AG04450 (cell line): ENCODE measurements at regions of chr5 and their contacts with region 1.

Region 1: GRCh38 chr5:140145818-140146522 is 20.2 kb downstream of the IGIP start:
- DNase-seq: peak; percentile 24
- H3K4me3 ChIP-seq: peak overlapping the region; percentile 54
- H3K27ac ChIP-seq: no peak overlapping the region
- H3K27me3 ChIP-seq: peaks cover 5% of the 10 kb centered on the region
- CTCF ChIP-seq: peak; percentile 52

Region 2: DNA sequence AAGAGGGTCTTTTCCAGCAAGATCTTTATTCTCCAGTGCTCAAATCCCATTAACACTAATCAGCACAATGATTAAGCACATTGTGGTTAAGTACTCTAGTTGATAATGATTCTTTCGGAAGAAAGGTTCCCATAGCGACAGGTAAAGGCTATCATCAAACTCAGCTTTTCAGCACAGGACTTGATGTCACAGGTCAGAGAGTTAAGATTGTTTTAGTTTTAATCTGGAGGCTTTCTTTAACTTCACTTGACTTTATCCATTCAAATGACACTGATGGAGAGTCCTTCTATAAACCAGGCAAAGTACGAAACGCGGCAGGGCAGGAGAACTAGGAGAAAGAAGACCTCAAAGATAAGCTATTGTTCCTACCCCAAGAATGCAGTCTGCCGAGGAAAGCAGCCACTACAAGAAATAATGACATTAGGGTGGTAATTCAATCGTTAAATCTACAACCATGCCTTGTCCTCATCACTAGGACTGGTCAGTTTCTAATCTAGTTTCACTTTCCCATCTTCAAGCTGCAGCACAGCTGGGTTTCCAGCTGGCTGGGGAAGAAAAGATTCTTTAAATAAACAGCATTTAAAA is 107.5 kb before region 1 on chr5:
- CTCF ChIA-PET with region 1: interaction called, 12 read pairs
- POLR2A ChIA-PET with region 1: no interaction called
- DNase-seq: peak; percentile 7
- H3K4me3 ChIP-seq: peak overlapping the region; percentile 46
- H3K27ac ChIP-seq: no peak overlapping the region
- H3K27me3 ChIP-seq: peaks cover 23% of the 10 kb centered on the region
- CTCF ChIP-seq: no peak

Region 3: GRCh38 chr5:140081030-140081429 is 64.9 kb before region 1 on chr5:
- CTCF ChIA-PET with region 1: interaction called, 161 read pairs
- POLR2A ChIA-PET with region 1: no interaction called
- DNase-seq: no peak
- H3K4me3 ChIP-seq: no peak overlapping the region
- H3K27ac ChIP-seq: no peak overlapping the region
- H3K27me3 ChIP-seq: peaks cover 29% of the 10 kb centered on the region
- CTCF ChIP-seq: no peak

Region 4: DNA sequence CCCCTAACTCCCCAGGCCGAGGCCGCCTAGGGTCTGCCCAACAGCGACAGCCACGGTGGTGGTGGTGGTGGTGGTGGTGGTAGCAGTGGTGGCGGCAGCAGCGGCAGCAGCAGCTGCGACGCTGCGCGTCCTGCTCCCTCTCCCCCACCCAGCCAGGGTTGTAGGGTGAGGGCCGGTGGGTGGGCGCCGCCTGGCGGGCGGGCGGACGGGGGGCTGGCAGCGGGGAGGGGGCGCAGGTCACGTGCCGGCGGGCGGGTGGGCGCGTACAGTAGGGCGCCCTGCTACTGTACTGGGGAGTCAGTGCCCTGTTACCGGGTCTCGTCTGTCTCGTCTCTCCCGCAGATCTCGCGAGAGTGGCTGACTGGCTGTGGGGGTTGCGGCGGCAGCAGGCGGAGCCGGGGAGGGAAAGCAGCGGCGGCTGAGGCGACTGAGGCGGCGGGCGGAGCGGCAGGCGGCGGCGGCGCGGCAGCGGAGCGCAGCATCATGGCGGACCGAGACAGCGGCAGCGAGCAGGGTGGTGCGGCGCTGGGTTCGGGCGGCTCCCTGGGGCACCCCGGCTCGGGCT is 32.2 kb before region 1 on chr5 and contains the start of gene PURA:
- CTCF ChIA-PET with region 1: interaction called, 148 read pairs
- POLR2A ChIA-PET with region 1: interaction called, 3 read pairs
- DNase-seq: peak; percentile 85
- H3K4me3 ChIP-seq: peak within 1 kb of the TSS; percentile 75
- H3K27ac ChIP-seq: peak within 1 kb of the TSS; percentile 73
- H3K27me3 ChIP-seq: peaks cover 7% of the 10 kb centered on the region
- CTCF ChIP-seq: no peak
- polyA plus RNA-seq, gene PURA: 3.5 and 4.5 TPM in 2 replicates

Region 5: GRCh38 chr5:140131967-140132409 is 14.0 kb before region 1 on chr5:
- CTCF ChIA-PET with region 1: interaction called, 133 read pairs
- POLR2A ChIA-PET with region 1: interaction called, 4 read pairs
- DNase-seq: peak; percentile 78
- H3K4me3 ChIP-seq: no peak overlapping the region
- H3K27ac ChIP-seq: peak overlapping the region; percentile 25
- H3K27me3 ChIP-seq: no peaks in the 10 kb centered on the region
- CTCF ChIP-seq: no peak

Region 6: GRCh38 chr5:140169410-140169809 is 23.4 kb after region 1 on chr5:
- CTCF ChIA-PET with region 1: interaction called, 17 read pairs
- POLR2A ChIA-PET with region 1: no interaction called
- DNase-seq: no peak
- H3K4me3 ChIP-seq: no peak overlapping the region
- H3K27ac ChIP-seq: no peak overlapping the region
- H3K27me3 ChIP-seq: peaks cover 3% of the 10 kb centered on the region
- CTCF ChIP-seq: no peak

Region 7: GRCh38 chr5:140588311-140589070 is 442.5 kb after region 1 on chr5:
- CTCF ChIA-PET with region 1: no interaction called
- POLR2A ChIA-PET with region 1: no interaction called
- DNase-seq: no peak
- H3K4me3 ChIP-seq: no peak overlapping the region
- H3K27ac ChIP-seq: no peak overlapping the region
- H3K27me3 ChIP-seq: no peaks in the 10 kb centered on the region
- CTCF ChIP-seq: no peak